Activated T-helper 1 cell treated with anti-CD3 and anti-CD28 coated beads, Interleukin-12 subunit alpha, Interleukin-12 subunit beta, Interleukin-2, Interleukin-4 antibody, amounts not matched to agents 30 ng/mL and 10 ng/mL and 1 ng/mL, durations not matched to agents 14 hours and 24 hours and 36 hours (primary cell): ENCODE measurements at regions of chr2 and their contacts with region 1.

Region 1: GRCh38 chr2:232697100-232697865 is at the start of gene GIGYF2:
- DNase-seq: peak; percentile 90
- H3K4me3 Mint-ChIP-seq: peak within 1 kb of the TSS; percentile 99
- H3K27ac Mint-ChIP-seq: peak within 1 kb of the TSS; percentile 87
- H3K4me1 Mint-ChIP-seq: peaks cover 30% of the 10 kb centered on the region
- H3K27me3 Mint-ChIP-seq: no peaks in the 10 kb centered on the region
- total RNA-seq, gene GIGYF2: 71.1 and 74.6 TPM in 2 replicates

Region 2: GRCh38 chr2:232550354-232551249 is 146.7 kb before region 1 on chr2 and contains the starts of genes EIF4E2 and TIGD1:
- intact Hi-C with region 1: loop called (anchors 2 kb)
- DNase-seq: peak; percentile 90
- H3K4me3 Mint-ChIP-seq: peak within 1 kb of the TSS; percentile 100
- H3K27ac Mint-ChIP-seq: peak within 1 kb of the TSS; percentile 100
- H3K4me1 Mint-ChIP-seq: peaks cover 76% of the 10 kb centered on the region
- H3K27me3 Mint-ChIP-seq: no peaks in the 10 kb centered on the region
- total RNA-seq, gene EIF4E2: 94.3 and 96.2 TPM in 2 replicates
- total RNA-seq, gene TIGD1: 8.4 and 8.9 TPM in 2 replicates

Region 3: DNA sequence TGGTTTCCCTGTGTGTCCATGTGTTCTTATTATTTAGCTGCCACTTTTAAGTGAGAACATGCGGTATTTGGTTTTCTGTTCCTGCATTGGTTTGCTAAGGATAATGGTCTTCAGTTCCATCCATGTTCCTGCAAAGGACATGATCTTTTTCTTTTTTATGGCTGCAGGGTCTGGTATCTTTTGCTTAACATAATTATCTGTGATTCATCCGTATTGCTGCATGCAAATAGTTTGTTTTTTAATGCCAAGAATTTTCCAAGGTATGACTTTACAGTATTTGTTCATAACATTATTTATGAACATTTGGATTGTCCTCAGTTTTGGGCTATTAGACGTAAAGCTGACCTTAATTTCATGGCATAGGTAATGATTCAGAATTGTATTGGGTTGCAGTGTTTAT is 17.7 kb after region 1 on chr2:
- intact Hi-C with region 1: loop called (anchors 1 kb)
- DNase-seq: no peak
- H3K4me3 Mint-ChIP-seq: no peak overlapping the region
- H3K27ac Mint-ChIP-seq: no peak overlapping the region
- H3K4me1 Mint-ChIP-seq: peaks cover 15% of the 10 kb centered on the region
- H3K27me3 Mint-ChIP-seq: no peaks in the 10 kb centered on the region

Region 4: GRCh38 chr2:232744963-232745362 is 47.7 kb after region 1 on chr2:
- intact Hi-C with region 1: loop called (anchors 5 kb)
- DNase-seq: no peak
- H3K4me3 Mint-ChIP-seq: no peak overlapping the region
- H3K27ac Mint-ChIP-seq: no peak overlapping the region
- H3K4me1 Mint-ChIP-seq: peaks cover 20% of the 10 kb centered on the region
- H3K27me3 Mint-ChIP-seq: no peaks in the 10 kb centered on the region

Region 5: GRCh38 chr2:233353769-233354499 is 656.7 kb after region 1 on chr2 and contains the start of gene DGKD:
- intact Hi-C with region 1: loop called (anchors 5 kb)
- DNase-seq: no peak
- H3K4me3 Mint-ChIP-seq: peak within 1 kb of the TSS; percentile 87
- H3K27ac Mint-ChIP-seq: peak within 1 kb of the TSS; percentile 90
- H3K4me1 Mint-ChIP-seq: peaks cover 67% of the 10 kb centered on the region
- H3K27me3 Mint-ChIP-seq: no peaks in the 10 kb centered on the region
- total RNA-seq, gene DGKD: 42.5 and 43.7 TPM in 2 replicates